PC-9 (cell line): ENCODE measurements at regions of chr22 and their contacts with region 1.

Region 1: GRCh38 chr22:38506118-38506962 is at the start of gene DDX17:
- DNase-seq: peak; percentile 93 to 97
- H3K4me3 ChIP-seq: peak within 1 kb of the TSS; percentile 99
- H3K27ac ChIP-seq: peak within 1 kb of the TSS; percentile 96
- H3K4me1 ChIP-seq: peaks cover 32% of the 10 kb centered on the region
- H3K27me3 ChIP-seq: no peaks in the 10 kb centered on the region
- CTCF ChIP-seq: 0 out of 2 replicates have a peak, but pooled peaks have one; percentile 13
- total RNA-seq, gene DDX17: 511 and 648 TPM in 2 replicates

Region 2: GRCh38 chr22:38317122-38317994 is 189.0 kb before region 1 on chr22 and contains the start of gene CSNK1E:
- CTCF ChIA-PET with region 1: no interaction called
- POLR2A ChIA-PET with region 1: no interaction called
- intact Hi-C with region 1: loop called (anchors 2 kb)
- DNase-seq: peak; percentile 45 to 81
- H3K4me3 ChIP-seq: peak within 1 kb of the TSS; percentile 85
- H3K27ac ChIP-seq: peak within 1 kb of the TSS; percentile 90
- H3K4me1 ChIP-seq: peaks cover 45% of the 10 kb centered on the region
- H3K27me3 ChIP-seq: no peaks in the 10 kb centered on the region
- CTCF ChIP-seq: no peak
- total RNA-seq, gene CSNK1E: 331 and 348 TPM in 2 replicates

Region 3: DNA sequence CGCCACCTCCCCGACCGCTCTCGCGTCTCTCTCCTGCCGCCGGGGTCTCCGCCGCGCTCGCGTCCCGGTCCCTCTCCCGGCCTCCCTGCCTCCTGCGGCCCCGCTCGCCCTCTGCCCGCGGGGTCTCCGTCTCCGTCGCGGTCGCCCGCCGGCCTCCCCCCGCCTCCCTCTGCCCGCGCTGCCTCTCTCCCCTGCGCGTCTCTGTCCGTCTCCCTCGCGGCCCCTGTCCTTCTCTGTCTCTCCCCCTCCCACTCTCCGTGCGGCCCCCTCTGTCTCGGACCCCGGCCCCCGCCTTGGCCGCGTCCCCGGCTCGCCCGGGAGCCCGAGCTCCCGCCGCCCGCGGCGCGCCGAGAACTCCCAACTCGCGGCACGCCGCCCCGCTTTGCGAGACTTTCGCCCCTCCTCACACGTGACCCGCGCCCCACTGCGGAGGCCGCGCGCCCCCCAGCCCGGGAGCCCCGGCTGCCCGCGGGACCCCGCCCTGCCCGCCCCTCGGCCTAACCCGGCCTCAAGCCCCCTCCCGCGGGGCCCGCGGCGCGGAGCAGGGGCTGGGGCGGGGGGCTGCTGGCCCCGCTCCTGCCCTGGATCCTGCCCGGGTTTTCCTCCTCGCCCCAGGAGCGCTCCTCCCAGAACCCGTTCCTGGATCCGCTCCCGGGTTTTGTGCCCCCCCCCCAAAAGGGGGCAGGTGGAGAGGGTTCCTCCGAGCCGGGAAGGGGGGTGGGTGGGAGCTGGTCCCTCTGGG is 50.6 kb before region 1 on chr22:
- CTCF ChIA-PET with region 1: no interaction called
- POLR2A ChIA-PET with region 1: no interaction called
- intact Hi-C with region 1: no loop called
- DNase-seq: peak in 1 of 2 experiments; percentile 42
- H3K4me3 ChIP-seq: peak overlapping the region; percentile 58; the same call in 1 of the 2 replicates
- H3K27ac ChIP-seq: no peak overlapping the region
- H3K4me1 ChIP-seq: no peaks in the 10 kb centered on the region
- H3K27me3 ChIP-seq: peaks cover 58% of the 10 kb centered on the region
- CTCF ChIP-seq: no peak

Region 4: GRCh38 chr22:38479096-38479837 is 27.1 kb before region 1 on chr22:
- CTCF ChIA-PET with region 1: no interaction called
- POLR2A ChIA-PET with region 1: interaction called, 12 read pairs
- intact Hi-C with region 1: no loop called
- DNase-seq: no peak
- H3K4me3 ChIP-seq: no peak overlapping the region
- H3K27ac ChIP-seq: no peak overlapping the region
- H3K4me1 ChIP-seq: no peaks in the 10 kb centered on the region
- H3K27me3 ChIP-seq: no peaks in the 10 kb centered on the region
- CTCF ChIP-seq: no peak

Region 5: GRCh38 chr22:38554281-38554680 is 47.9 kb after region 1 on chr22:
- CTCF ChIA-PET with region 1: no interaction called
- POLR2A ChIA-PET with region 1: no interaction called
- intact Hi-C with region 1: loop called (anchors 2 kb)
- DNase-seq: no peak
- H3K4me3 ChIP-seq: no peak overlapping the region
- H3K27ac ChIP-seq: no peak overlapping the region
- H3K4me1 ChIP-seq: peaks cover 12% of the 10 kb centered on the region
- H3K27me3 ChIP-seq: no peaks in the 10 kb centered on the region
- CTCF ChIP-seq: no peak

Region 6: GRCh38 chr22:38569972-38570778 is 63.8 kb after region 1 on chr22 and contains the start of gene DMC1:
- CTCF ChIA-PET with region 1: interaction called, 6 read pairs
- POLR2A ChIA-PET with region 1: no interaction called
- intact Hi-C with region 1: loop called (anchors 1 kb)
- DNase-seq: peak; percentile 77 to 91
- H3K4me3 ChIP-seq: peak within 1 kb of the TSS; percentile 64
- H3K27ac ChIP-seq: no peak within 1 kb of the TSS
- H3K4me1 ChIP-seq: peaks cover 10% of the 10 kb centered on the region
- H3K27me3 ChIP-seq: no peaks in the 10 kb centered on the region
- CTCF ChIP-seq: no peak
- total RNA-seq, gene DMC1: 5.6 and 6.3 TPM in 2 replicates

Region 7: GRCh38 chr22:38656256-38657044 is 150.1 kb after region 1 on chr22 and contains the starts of genes CBY1 and FAM227A:
- CTCF ChIA-PET with region 1: no interaction called
- POLR2A ChIA-PET with region 1: no interaction called
- intact Hi-C with region 1: loop called (anchors 10 kb)
- DNase-seq: peak; percentile 84 to 94
- H3K4me3 ChIP-seq: peak within 1 kb of the TSS; percentile 80
- H3K27ac ChIP-seq: peak within 1 kb of the TSS; percentile 49
- H3K4me1 ChIP-seq: peaks cover 13% of the 10 kb centered on the region; the same call in 1 of the 2 replicates
- H3K27me3 ChIP-seq: no peaks in the 10 kb centered on the region
- CTCF ChIP-seq: no peak
- total RNA-seq, gene CBY1: 58.9 and 61.8 TPM in 2 replicates
- total RNA-seq, gene FAM227A: 8.8 and 9.8 TPM in 2 replicates

Region 8: DNA sequence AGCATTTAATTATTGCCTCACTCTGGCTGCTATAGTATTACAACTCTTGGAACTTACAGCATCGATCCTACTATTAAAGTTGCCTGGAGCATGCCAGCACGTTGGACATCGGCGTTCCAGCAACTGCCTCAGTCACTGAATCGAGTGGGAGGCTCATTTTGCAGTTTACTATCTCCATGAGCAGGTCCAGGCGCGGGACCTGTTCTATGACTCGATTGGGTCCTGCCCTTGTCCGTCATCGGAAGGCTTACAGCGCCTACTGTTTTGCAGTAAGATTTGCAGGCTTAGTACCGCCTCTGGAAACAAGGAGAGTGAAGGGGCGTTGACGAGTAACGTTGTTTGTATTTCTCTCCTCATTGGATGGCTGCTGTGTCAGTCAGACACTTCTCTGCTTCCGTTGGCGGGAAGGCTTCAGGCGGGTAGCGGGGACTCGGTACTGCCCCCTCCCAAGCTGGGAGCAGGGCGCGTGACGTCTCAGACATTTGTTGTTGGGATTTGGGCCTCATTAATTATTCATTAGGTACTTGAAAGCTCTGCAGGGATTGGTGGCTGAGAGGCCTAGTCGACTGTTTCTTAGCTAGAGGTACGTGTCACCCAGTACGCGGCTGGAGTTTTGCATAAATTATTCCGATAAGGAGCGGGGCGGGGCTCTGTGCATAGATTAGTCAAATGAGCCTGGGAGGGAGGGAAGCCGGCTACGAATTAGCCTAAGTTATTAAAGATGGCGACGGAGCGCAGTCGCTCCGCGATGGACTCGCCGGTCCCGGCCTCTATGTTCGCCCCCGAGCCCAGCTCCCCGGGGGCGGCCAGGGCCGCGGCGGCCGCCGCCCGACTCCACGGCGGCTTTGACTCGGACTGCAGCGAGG is 199.1 kb after region 1 on chr22 and contains the start of gene GTPBP1:
- CTCF ChIA-PET with region 1: no interaction called
- POLR2A ChIA-PET with region 1: no interaction called
- intact Hi-C with region 1: loop called (anchors 10 kb)
- DNase-seq: peak; percentile 99 to 100
- H3K4me3 ChIP-seq: peak within 1 kb of the TSS; percentile 98
- H3K27ac ChIP-seq: peak within 1 kb of the TSS; percentile 88
- H3K4me1 ChIP-seq: peaks cover 46% of the 10 kb centered on the region
- H3K27me3 ChIP-seq: no peaks in the 10 kb centered on the region
- CTCF ChIP-seq: no peak
- total RNA-seq, gene GTPBP1: 79.3 and 94.7 TPM in 2 replicates

Region 9: DNA sequence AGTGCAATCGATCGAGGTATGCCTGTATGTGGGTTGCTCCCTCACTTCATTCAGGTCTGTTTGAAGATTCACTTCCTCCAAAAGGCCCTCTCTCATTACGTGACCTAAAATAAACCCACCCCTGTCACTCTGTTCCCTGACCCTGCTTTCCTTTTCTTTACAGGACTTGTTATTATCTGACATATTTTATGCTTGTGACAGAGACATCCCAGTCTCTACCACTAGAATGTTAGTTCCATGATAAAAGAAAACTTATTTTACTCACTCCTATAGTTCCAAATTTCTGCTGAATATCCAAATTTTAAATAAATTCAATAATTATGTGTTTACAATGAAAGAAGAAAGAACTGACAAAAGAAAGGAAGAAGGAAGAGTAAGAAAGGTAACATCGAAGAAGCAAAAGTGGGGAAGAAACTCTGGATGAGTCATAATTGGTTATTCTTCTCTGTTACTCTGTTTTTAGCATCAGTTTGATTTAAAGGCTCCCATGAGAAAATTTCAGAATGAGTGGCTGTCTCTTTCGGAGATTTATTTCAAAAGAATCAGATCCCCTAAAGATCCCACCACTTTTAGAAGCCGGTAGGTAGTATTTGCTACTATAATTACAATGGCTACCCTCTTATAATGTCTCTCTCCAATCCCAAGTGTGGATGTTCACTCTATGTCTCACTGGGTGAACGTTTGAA is 1353.7 kb after region 1 on chr22:
- CTCF ChIA-PET with region 1: no interaction called
- POLR2A ChIA-PET with region 1: no interaction called
- intact Hi-C with region 1: no loop called
- DNase-seq: peak in 1 of 2 experiments; percentile 6
- H3K4me3 ChIP-seq: no peak overlapping the region
- H3K27ac ChIP-seq: no peak overlapping the region
- H3K4me1 ChIP-seq: no peaks in the 10 kb centered on the region
- H3K27me3 ChIP-seq: peaks cover 69% of the 10 kb centered on the region
- CTCF ChIP-seq: no peak